ENCODE measurements at regions of chr15 and their contacts with region 1.

Region 1: GRCh38 chr15:51888593-51889195 is 59.2 kb downstream of the TMOD3 start:
- DNase-seq: no peak
- ATAC-seq: no peak

Region 2: GRCh38 chr15:51726351-51727073 is 162.2 kb before region 1 on chr15:
- intact Hi-C with region 1: no loop called
- DNase-seq: no peak
- ATAC-seq: peak; percentile 97

Region 3: DNA sequence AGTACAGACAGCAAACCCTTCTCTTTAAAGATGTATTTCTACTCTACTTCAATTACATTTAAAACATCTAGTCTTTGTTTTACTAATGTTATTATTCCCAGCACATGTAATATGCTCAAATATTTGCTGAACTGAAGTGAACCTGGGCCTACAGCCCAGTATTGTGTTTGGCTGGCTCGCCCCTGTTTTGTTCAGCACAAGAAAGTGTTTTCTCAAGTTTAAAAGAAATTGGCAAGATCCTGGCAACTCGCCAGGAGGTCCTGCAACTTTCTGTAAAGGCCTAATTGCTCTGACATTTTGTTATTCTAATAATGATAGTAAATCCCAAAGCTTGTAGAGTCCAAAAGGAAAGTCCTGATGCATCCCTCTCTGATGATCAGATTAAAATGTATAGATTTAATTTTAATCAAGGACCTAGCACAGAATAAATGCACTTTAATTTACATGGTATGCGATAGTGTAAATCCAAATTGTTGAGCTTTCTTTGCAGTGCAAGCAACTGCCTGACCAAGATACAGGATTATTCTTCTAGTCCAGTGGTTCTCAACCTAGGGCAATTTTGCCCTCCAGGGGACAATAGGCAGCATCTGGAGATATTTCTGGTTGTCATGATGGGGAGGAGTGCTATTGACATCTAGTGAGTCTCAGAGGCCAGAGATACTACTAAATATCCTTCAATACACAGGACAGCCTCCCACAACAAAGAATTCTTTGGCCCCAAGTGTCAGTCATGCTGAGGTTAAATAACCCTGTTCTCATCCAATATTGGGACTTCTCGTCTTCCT is 95.0 kb before region 1 on chr15:
- intact Hi-C with region 1: loop called (anchors 10 kb)
- DNase-seq: no peak
- ATAC-seq: no peak

Region 4: GRCh38 chr15:52139599-52140491 is 251.2 kb after region 1 on chr15:
- intact Hi-C with region 1: loop called (anchors 10 kb)
- DNase-seq: peak; percentile 81
- ATAC-seq: no peak

Measured in Right ventricle myocardium inferior (tissue), 1 donor.